Caco-2 (cell line): ENCODE measurements at regions of chr17 and their contacts with region 1.

Region 1: GRCh38 chr17:38799378-38800236 is at the start of gene PIP4K2B:
- DNase-seq: peak; percentile 98 to 99
- H3K4me3 ChIP-seq: peak within 1 kb of the TSS; percentile 97
- H3K4me3 Mint-ChIP-seq: peak within 1 kb of the TSS; percentile 93
- H3K27ac Mint-ChIP-seq: peak within 1 kb of the TSS; percentile 91
- H3K4me1 ChIP-seq: peaks cover 10% of the 10 kb centered on the region
- H3K4me1 Mint-ChIP-seq: peaks cover 28% of the 10 kb centered on the region
- H3K27me3 ChIP-seq: no peaks in the 10 kb centered on the region
- H3K27me3 Mint-ChIP-seq: no peaks in the 10 kb centered on the region
- CTCF ChIP-seq: no peak
- total RNA-seq, gene PIP4K2B: 39.6 and 42.3 TPM in 2 replicates

Region 2: DNA sequence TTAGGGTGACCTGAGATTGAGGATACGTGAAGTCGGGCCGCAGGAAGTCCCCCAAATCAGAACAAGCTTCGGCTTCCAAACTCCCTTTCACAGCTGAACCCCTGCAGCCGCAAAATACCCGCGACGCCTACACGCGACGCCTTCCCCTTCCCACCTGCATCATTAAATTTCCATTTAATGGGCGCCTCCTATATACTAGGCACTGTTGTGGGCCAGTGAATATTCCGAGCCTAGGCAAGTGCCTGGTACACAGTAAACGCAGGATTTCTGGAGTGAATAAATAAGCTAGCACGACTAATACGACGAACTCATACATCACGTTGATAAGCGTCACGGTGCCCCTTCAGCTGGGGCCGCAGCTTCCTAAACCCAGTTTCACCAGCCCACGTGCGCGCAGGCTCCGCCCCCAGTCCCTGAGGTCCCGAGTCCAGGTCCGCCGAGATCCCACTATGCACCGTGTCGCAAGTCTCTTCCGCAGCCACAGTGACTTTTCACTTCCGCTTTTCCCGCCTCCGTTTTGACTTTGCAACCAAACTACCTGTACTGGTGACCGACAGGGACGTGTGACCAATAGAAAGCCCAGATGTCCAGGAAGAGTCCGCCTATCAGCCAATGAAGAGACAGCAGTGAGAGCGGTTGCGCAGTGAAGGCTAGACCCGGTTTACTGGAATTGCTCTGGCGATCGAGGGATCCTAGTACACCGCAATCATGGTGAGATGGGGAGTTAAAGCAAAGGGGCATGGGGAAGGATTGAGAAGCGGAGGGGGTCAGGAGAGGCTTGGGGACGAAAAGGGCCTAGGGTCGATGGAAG is 47.3 kb before region 1 on chr17 and contains the start of gene PSMB3:
- CTCF ChIA-PET with region 1: no interaction called
- POLR2A ChIA-PET with region 1: interaction called, 4 read pairs
- intact Hi-C with region 1: loop called (anchors 1 kb)
- DNase-seq: peak; percentile 98 to 100
- H3K4me3 ChIP-seq: peak within 1 kb of the TSS; percentile 90
- H3K4me3 Mint-ChIP-seq: peak within 1 kb of the TSS; percentile 79
- H3K27ac Mint-ChIP-seq: peak within 1 kb of the TSS; percentile 80
- H3K4me1 ChIP-seq: peaks cover 13% of the 10 kb centered on the region
- H3K4me1 Mint-ChIP-seq: peaks cover 18% of the 10 kb centered on the region
- H3K27me3 ChIP-seq: no peaks in the 10 kb centered on the region
- H3K27me3 Mint-ChIP-seq: peaks cover 2% of the 10 kb centered on the region
- CTCF ChIP-seq: no peak
- total RNA-seq, gene PSMB3: 427 and 465 TPM in 2 replicates

Region 3: GRCh38 chr17:38824899-38825761 is 25.5 kb after region 1 on chr17 and contains the start of gene CWC25:
- CTCF ChIA-PET with region 1: no interaction called
- POLR2A ChIA-PET with region 1: interaction called, 3 read pairs
- intact Hi-C with region 1: loop called (anchors 1 kb)
- DNase-seq: peak; percentile 97 to 98
- H3K4me3 ChIP-seq: peak within 1 kb of the TSS; percentile 86
- H3K4me3 Mint-ChIP-seq: peak within 1 kb of the TSS; percentile 98
- H3K27ac Mint-ChIP-seq: peak within 1 kb of the TSS; percentile 100
- H3K4me1 ChIP-seq: peaks cover 9% of the 10 kb centered on the region
- H3K4me1 Mint-ChIP-seq: no peaks in the 10 kb centered on the region
- H3K27me3 ChIP-seq: no peaks in the 10 kb centered on the region
- H3K27me3 Mint-ChIP-seq: no peaks in the 10 kb centered on the region
- CTCF ChIP-seq: no peak
- total RNA-seq, gene CWC25: 18.2 and 19.1 TPM in 2 replicates